ENCODE measurements at regions of chr6 and their contacts with region 1.

Region 1: DNA sequence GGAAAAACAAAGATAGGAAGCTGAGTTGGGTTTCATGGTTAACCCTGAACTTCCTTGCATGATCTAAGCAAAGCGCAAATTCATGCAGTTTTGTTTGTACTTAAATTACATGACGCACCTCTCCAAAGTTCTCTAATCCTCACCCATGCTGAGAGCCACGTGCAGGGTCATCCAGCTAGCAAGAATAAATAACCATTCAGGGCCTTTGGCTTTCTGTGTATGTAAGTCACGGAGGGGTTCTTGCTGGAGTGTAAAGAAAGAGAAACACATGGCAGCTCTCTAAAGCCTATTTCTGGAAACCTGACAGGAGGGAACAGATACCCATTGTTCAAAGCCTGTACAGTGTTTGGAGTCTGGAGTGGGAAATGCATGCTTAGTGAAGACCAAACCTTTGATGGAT is 171.7 kb upstream of the CCN2 start:
- DNase-seq: peak; percentile 100
- H3K4me3 ChIP-seq: no peak overlapping the region
- H3K27ac ChIP-seq: peak overlapping the region; percentile 98
- H3K27me3 ChIP-seq: no peaks in the 10 kb centered on the region
- CTCF ChIP-seq: no peak

Region 2: DNA sequence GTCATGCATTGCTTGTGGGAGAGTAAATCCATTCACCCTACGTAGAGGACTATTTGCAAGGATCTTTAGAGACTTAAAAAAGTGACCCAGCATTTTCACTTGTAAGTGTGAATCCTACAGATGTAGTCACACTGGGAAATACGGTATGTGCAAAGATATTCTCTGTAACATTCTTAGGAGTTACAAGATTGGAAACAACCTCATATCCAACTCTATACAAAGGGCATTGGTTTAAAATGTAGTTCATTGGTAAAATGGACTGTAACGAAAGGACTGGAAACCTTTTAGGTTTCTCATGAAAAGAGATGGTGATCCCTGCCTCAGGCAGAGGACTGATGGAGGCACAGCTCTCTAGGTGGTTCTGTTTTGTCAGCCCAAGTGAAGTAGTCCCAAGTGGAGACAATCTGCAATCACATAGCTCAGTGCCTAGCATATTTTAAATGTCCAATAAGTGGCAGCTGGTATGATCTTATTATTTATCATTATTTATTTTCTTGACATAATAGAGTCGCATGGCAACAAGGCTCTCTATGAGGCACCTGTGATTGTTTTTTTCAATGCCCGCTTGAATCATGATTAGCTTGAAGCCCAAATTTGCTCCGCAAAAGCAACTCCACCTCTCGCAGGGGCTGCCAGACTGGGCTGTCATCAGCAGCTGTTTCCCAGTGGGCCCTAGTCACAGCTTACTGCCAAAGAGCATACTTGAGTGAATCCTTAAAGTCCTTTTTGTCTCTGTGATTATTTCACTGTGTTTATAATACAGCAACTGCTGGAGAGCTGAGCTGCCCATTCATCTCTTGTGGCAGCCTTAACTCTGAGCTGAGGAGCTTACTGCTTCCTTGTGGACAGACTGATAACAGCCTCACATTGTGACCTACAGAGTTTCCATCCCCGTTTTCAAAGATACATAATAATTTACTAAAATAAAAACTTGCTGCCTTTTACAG is 334.8 kb before region 1 on chr6:
- CTCF ChIA-PET with region 1: no interaction called
- POLR2A ChIA-PET with region 1: no interaction called
- DNase-seq: no peak
- H3K4me3 ChIP-seq: no peak overlapping the region
- H3K27ac ChIP-seq: no peak overlapping the region
- H3K27me3 ChIP-seq: no peaks in the 10 kb centered on the region
- CTCF ChIP-seq: peak; percentile 47

Region 3: DNA sequence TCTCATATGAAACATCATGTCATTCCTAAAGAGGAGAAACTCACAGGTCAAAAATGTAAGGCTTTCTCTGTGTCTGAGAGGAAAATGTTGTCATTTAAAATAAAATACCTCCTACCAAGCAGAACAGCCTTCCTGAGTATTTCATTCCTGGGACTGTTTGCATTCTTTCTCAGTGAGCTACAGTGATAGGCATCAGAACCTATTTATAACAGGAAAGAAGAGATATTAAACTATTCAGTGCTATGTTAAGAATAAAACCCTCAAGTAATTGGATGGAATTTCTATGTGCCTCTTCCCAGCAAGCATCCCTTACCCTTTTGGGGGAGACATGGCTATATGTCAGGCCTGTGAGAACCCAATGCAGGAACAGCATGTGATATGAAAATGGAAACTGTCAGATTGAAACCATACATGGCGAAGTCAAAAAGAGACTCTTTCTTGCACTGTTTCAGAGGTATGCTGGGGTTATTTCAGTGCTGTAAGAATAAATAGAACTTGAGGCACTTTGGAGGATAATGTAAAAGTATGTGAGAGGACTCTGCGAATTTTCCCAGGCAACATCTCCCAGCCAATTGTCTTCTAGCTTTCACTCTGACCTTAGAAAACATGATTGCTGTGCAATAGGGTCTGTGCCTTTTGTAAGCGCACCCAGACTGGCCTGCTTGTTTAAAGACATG is 37.9 kb before region 1 on chr6:
- CTCF ChIA-PET with region 1: no interaction called
- POLR2A ChIA-PET with region 1: interaction called, 12 read pairs
- DNase-seq: peak; percentile 95
- H3K4me3 ChIP-seq: no peak overlapping the region
- H3K27ac ChIP-seq: peak overlapping the region; percentile 99
- H3K27me3 ChIP-seq: no peaks in the 10 kb centered on the region
- CTCF ChIP-seq: no peak

Measured in AG04450 (cell line).